Endothelial cell of umbilical vein (primary cell): ENCODE measurements at regions of chr7 and their contacts with region 1.

Region 1: DNA sequence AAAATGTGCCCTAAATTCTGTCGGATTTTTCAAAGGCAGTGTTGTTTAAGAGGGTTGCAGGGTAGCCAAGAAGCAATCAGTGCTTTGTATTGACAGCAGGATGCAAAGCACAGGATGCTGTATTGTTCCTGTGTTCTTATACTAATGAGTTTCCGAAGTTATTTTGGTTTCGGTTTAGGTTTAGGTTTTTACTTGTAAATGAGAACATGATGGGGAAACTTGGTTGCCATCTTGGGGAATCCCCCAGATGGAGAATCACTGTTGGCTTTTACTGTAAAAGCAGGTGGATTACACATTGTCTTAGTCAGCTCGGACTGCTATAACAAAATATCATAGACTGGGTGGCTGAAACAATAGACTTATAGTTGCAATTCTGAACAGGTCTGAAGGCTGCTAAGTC is 72.1 kb downstream of the INHBA start:
- DNase-seq: peak; percentile 14
- H3K4me3 ChIP-seq: no peak overlapping the region
- H3K27ac ChIP-seq: no peak overlapping the region
- H3K4me1 ChIP-seq: no peaks in the 10 kb centered on the region
- H3K27me3 ChIP-seq: no peaks in the 10 kb centered on the region
- CTCF ChIP-seq: no peak
- POLR2A ChIP-seq: no peak

Region 2: DNA sequence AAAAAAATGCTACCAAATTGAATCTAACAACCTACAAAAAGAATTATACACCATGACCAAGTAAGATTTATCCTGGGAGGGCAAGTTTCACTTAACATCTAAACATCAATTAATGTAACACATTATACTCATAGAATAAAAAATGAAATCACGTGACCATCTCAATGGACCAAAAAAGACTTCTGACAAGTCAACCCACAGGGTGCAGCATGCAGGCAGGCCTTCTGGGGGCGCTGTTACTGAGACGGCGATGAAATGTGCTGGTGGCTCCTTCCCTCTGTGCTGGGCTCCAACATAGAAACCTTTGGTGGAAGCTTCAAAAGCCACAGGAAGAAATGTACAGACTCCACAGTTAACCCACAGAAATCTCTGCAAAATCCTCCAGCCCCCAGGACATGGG is 31.0 kb before region 1 on chr7:
- CTCF ChIA-PET with region 1: no interaction called
- POLR2A ChIA-PET with region 1: no interaction called
- dilution Hi-C with region 1: no loop called
- intact Hi-C with region 1: loop called (anchors 5 kb)
- DNase-seq: no peak
- H3K4me3 ChIP-seq: no peak overlapping the region
- H3K27ac ChIP-seq: no peak overlapping the region
- H3K4me1 ChIP-seq: no peaks in the 10 kb centered on the region
- H3K27me3 ChIP-seq: no peaks in the 10 kb centered on the region
- CTCF ChIP-seq: peak; percentile 16 to 24
- POLR2A ChIP-seq: no peak